ENCODE measurements at regions of chr3 and their contacts with region 1.

Region 1: GRCh38 chr3:149224736-149225594 is 3.3 kb upstream of the CP start:
- DNase-seq: peak in 2 of 9 donors; percentile 2 to 41
- ATAC-seq: peak; percentile 90
- H3K4me3 ChIP-seq: peak overlapping the region; percentile 47
- H3K4me3 Mint-ChIP-seq: peak overlapping the region; percentile 31 to 86 (median 82)
- H3K27ac ChIP-seq: no peak overlapping the region
- H3K27ac Mint-ChIP-seq: peak overlapping the region in 8 of 9 donors; percentile 1 to 90 (median 39)
- H3K4me1 ChIP-seq: peaks cover 0 to 7% of the 10 kb centered on the region in 2 donors
- H3K4me1 Mint-ChIP-seq: peaks cover 14 to 32% (median 25%) of the 10 kb centered on the region in 7 donors
- H3K27me3 ChIP-seq: no peaks in the 10 kb centered on the region
- H3K27me3 Mint-ChIP-seq: peaks cover 0 to 6% (median 0%) of the 10 kb centered on the region in 5 donors

Region 2: GRCh38 chr3:149203758-149204157 is 21.2 kb before region 1 on chr3:
- CTCF ChIA-PET with region 1: no interaction called
- POLR2A ChIA-PET with region 1: no interaction called
- intact Hi-C with region 1: loop called in 1 of 2 experiments (anchors 2 kb)
- DNase-seq: no peak
- ATAC-seq: peak; percentile 76
- H3K4me3 ChIP-seq: no peak overlapping the region
- H3K4me3 Mint-ChIP-seq: peak overlapping the region in 1 of 10 donors; percentile 37
- H3K27ac ChIP-seq: no peak overlapping the region
- H3K27ac Mint-ChIP-seq: no peak overlapping the region
- H3K4me1 ChIP-seq: no peaks in the 10 kb centered on the region
- H3K4me1 Mint-ChIP-seq: peaks cover 0 to 13% (median 6%) of the 10 kb centered on the region in 7 donors
- H3K27me3 ChIP-seq: no peaks in the 10 kb centered on the region
- H3K27me3 Mint-ChIP-seq: peaks cover 10 to 54% (median 14%) of the 10 kb centered on the region in 5 donors

Region 3: DNA sequence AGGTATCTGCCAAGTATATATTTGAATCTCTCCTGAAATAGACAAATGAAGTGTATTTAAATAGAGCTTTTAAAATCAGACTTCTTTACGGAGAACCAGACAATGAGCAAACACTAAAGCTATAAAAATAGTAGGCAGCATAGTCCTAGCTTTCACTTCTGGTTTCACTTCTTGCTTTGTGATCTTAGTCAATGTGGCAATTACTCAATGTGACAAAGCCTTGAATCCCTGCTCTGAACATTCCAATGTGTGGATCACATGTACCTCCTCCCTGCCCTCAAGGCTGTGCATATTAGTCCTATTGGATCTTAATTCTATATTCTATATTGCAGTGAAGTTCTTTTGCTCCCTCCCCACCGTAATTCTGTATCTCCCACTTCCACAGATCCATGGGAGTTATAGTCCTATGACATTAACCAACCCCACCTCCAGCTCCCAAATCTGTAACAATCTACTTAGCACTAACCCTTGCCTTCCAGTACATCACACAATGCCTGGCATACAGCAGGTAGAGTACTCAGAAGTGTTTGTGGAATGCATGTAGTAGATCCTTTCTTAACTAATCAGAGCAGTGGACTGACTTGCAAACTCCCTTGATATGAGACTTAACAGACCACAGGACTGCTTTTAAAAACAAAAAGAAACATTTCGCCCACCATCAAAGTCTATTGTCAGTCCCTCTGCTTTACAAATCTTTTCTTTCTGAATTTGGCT is 20.9 kb after region 1 on chr3:
- CTCF ChIA-PET with region 1: no interaction called
- POLR2A ChIA-PET with region 1: no interaction called
- intact Hi-C with region 1: loop called in 1 of 2 experiments (anchors 2 kb)
- DNase-seq: no peak
- ATAC-seq: peak; percentile 63
- H3K4me3 ChIP-seq: no peak overlapping the region
- H3K4me3 Mint-ChIP-seq: peak overlapping the region in 7 of 10 donors; percentile 3 to 56 (median 38)
- H3K27ac ChIP-seq: no peak overlapping the region
- H3K27ac Mint-ChIP-seq: peak overlapping the region in 3 of 9 donors; percentile 27 to 53 (median 48)
- H3K4me1 ChIP-seq: no peaks in the 10 kb centered on the region
- H3K4me1 Mint-ChIP-seq: peaks cover 0 to 41% (median 7%) of the 10 kb centered on the region in 7 donors
- H3K27me3 ChIP-seq: no peaks in the 10 kb centered on the region
- H3K27me3 Mint-ChIP-seq: peaks cover 0 to 5% (median 3%) of the 10 kb centered on the region in 5 donors